ENCODE measurements at regions of chr15 and their contacts with region 1.

Region 1: GRCh38 chr15:91852741-91853510 is 582 bp upstream of the SLCO3A1 start:
- DNase-seq: peak; percentile 46 to 74
- H3K4me3 ChIP-seq: peak overlapping the region; percentile 86
- H3K27ac ChIP-seq: peak overlapping the region; percentile 74
- H3K4me1 ChIP-seq: peaks cover 44% of the 10 kb centered on the region
- H3K27me3 ChIP-seq: no peaks in the 10 kb centered on the region
- CTCF ChIP-seq: peak; percentile 72

Region 2: DNA sequence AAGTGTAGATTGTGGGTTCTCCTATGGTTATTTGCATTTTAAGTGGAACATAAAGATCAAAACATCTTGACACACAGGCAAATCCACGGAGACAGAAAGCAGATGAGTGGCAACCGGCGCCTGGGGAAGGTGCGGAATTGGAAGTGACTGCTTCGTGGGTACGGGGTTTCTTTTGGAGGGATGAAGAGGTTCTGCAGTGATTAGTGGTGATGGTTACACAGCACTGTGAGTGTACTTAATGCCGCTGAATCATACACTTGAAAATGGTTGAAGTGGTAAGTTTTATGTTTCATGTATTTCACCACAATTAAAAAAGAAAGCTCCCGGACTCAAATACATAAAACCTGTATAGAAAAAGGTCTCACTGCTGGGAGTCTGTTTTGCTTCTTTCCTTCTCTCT is 812.1 kb before region 1 on chr15:
- CTCF ChIA-PET with region 1: no interaction called
- POLR2A ChIA-PET with region 1: no interaction called
- intact Hi-C with region 1: no loop called
- DNase-seq: no peak
- H3K4me3 ChIP-seq: no peak overlapping the region
- H3K27ac ChIP-seq: no peak overlapping the region
- H3K4me1 ChIP-seq: no peaks in the 10 kb centered on the region
- H3K27me3 ChIP-seq: peaks cover 14% of the 10 kb centered on the region; the same call in 1 of the 2 replicates
- CTCF ChIP-seq: no peak

Region 3: DNA sequence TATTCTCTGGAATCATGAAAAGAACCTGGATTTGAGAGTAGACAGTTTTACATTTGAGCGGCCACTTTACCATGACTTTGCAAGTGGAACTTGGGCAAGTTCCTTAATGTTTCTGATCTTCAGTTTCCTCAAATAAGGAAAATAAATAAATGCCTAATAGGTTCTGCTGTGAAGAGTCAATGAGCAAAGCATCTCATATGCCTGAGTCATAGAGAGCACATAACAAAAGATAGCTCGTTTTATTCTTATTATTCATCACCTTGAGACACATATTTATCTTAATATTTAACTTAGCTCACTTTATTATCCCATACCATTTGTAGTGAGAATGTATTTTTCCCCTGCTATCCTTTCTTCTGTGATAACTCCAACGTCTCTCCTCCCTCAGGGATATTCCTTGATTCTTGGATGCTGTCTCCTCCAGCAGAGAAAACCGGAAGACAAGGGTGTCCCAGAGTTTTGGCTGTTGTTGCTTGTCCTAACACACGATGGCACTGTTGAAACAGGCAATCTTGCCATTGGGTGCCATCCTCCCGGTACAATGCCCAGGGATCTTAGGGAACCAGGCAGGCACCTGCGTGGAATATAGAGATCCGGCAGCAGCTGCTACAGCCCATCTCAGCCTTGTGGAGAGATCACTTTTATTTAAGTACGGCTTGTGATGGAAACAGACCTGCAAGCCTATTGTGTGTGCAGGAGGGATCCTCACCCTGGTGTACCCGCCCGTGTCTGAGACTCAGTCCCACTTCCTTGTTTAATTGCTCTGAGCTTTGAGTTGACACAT is 797.2 kb before region 1 on chr15:
- CTCF ChIA-PET with region 1: no interaction called
- POLR2A ChIA-PET with region 1: no interaction called
- intact Hi-C with region 1: loop called (anchors 5 kb)
- DNase-seq: peak; percentile 43 to 54
- H3K4me3 ChIP-seq: no peak overlapping the region
- H3K27ac ChIP-seq: no peak overlapping the region
- H3K4me1 ChIP-seq: no peaks in the 10 kb centered on the region
- H3K27me3 ChIP-seq: peaks cover 90% of the 10 kb centered on the region
- CTCF ChIP-seq: peak; percentile 79

Region 4: DNA sequence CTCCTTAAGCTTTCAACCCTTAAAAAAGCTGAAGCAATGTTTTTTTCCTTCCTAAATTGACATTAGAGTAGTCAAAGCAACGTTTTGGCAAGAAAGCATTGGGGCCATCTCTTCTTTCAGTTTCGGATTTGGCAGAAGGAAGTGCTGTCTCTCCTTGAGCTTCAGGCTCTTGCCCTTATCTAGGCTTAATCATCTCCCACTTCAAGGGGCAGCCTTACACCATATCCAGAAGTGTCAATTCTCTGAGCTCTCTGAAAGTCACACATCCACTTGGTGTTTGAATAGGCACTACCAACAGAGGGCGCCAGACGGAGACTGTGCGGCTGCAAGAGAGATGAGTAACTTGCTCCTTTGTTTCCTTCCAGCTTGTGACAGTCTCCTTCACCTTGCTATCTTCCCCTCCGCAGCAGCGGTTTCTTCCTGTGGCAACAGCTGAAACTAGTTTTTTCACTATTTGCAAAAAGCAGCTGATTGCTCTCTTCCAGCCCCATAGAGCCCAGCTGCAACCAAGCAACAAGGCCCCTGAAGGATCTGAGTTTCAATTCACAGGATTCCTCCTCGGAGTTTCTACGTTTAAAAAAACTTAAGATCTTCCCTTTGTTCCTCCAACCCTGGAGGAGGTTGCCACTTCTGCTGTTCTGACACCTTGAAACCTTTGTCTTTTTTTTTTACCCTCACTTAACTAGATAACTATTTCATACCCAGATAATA is 146.4 kb before region 1 on chr15:
- CTCF ChIA-PET with region 1: interaction called, 6 read pairs
- POLR2A ChIA-PET with region 1: no interaction called
- intact Hi-C with region 1: loop called (anchors 1 kb)
- DNase-seq: peak; percentile 57 to 60
- H3K4me3 ChIP-seq: no peak overlapping the region
- H3K27ac ChIP-seq: no peak overlapping the region
- H3K4me1 ChIP-seq: peaks cover 14% of the 10 kb centered on the region
- H3K27me3 ChIP-seq: no peaks in the 10 kb centered on the region
- CTCF ChIP-seq: peak; percentile 92

Region 5: DNA sequence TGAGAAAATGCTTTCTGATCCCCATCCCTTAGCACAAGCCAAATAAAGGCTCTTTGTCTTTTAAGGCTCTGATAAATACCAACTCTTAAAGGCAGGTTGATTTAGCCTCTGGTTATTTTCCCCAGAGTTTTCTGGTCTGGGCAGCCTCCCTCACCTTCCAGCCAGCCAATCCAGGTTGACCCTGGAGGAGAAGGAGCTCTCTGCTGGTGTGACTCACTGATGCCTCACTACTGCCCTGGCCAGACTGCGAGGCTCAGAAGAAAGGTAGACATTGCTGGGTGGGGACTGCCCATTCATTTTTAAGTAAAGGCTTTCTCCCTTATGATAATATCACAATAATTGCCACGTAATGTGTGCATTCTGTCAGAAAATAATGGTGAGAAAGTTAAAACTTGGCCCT is 37.7 kb after region 1 on chr15:
- CTCF ChIA-PET with region 1: interaction called, 3 read pairs
- POLR2A ChIA-PET with region 1: interaction called, 18 read pairs
- intact Hi-C with region 1: loop called (anchors 2 kb)
- DNase-seq: peak; percentile 78 to 89
- H3K4me3 ChIP-seq: no peak overlapping the region
- H3K27ac ChIP-seq: peak overlapping the region; percentile 64
- H3K4me1 ChIP-seq: peaks cover 41% of the 10 kb centered on the region
- H3K27me3 ChIP-seq: no peaks in the 10 kb centered on the region
- CTCF ChIP-seq: no peak

Region 6: DNA sequence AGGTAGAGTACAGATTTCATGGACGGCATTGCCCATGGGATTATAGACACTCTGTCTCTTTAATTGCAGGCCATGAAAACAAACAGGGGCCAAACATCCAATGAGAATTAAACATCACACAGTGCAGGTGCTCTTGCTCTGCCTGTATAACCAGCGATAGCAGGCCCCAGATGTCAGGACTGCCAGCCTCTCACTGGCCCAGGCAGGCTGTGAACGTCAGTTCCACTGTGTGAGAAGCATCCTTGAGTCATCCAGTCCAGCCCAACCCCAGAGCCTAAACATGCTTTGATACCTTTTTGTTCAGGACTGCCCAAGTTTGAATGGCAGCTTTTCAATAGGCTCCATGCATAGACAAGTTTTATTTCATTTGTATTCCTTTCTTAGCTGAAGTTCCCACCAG is 190.3 kb after region 1 on chr15:
- CTCF ChIA-PET with region 1: no interaction called
- POLR2A ChIA-PET with region 1: no interaction called
- intact Hi-C with region 1: no loop called
- DNase-seq: no peak
- H3K4me3 ChIP-seq: no peak overlapping the region
- H3K27ac ChIP-seq: no peak overlapping the region
- H3K4me1 ChIP-seq: no peaks in the 10 kb centered on the region
- H3K27me3 ChIP-seq: no peaks in the 10 kb centered on the region
- CTCF ChIP-seq: no peak

Region 7: GRCh38 chr15:92077353-92078085 is 224.6 kb after region 1 on chr15:
- CTCF ChIA-PET with region 1: interaction called, 6 read pairs
- POLR2A ChIA-PET with region 1: no interaction called
- intact Hi-C with region 1: loop called (anchors 1 kb)
- DNase-seq: peak; percentile 47 to 63
- H3K4me3 ChIP-seq: no peak overlapping the region
- H3K27ac ChIP-seq: no peak overlapping the region
- H3K4me1 ChIP-seq: peaks cover 7% of the 10 kb centered on the region
- H3K27me3 ChIP-seq: no peaks in the 10 kb centered on the region
- CTCF ChIP-seq: peak; percentile 76

Region 8: DNA sequence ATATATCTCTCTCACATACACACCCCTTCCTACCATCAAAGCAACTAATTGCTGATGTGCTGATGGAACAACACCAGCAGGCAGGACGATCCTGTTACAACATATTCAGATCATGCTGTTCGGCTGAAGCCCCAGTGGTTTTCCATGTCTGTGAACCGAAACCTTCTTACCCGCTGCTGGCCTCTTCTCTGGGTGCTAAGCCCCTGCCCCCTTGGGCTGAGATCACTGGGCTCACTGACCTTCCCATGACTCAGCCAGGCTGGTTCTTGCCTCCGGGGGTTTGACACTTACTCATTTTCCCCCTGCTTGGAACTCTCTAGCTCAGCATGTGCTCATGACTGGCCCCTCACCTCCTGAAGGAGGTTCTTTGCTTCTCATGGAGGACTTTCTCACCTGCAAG is 1358.1 kb after region 1 on chr15:
- CTCF ChIA-PET with region 1: no interaction called
- POLR2A ChIA-PET with region 1: no interaction called
- intact Hi-C with region 1: no loop called
- DNase-seq: no peak
- H3K4me3 ChIP-seq: no peak overlapping the region
- H3K27ac ChIP-seq: no peak overlapping the region
- H3K4me1 ChIP-seq: no peaks in the 10 kb centered on the region
- H3K27me3 ChIP-seq: peaks cover 58% of the 10 kb centered on the region
- CTCF ChIP-seq: no peak

Measured in PC-9 (cell line).